ENCODE measurements at regions of chr7 and their contacts with region 1.

Region 1: GRCh38 chr7:20172736-20173334 is 44.3 kb downstream of the MACC1 start:
- DNase-seq: peak; percentile 84
- ATAC-seq: peak; percentile 100
- H3K4me3 Mint-ChIP-seq: no peak overlapping the region
- H3K27ac Mint-ChIP-seq: no peak overlapping the region
- H3K4me1 Mint-ChIP-seq: peaks cover 28% of the 10 kb centered on the region
- H3K27me3 Mint-ChIP-seq: no peaks in the 10 kb centered on the region
- CTCF ChIP-seq: peak; percentile 49

Region 2: DNA sequence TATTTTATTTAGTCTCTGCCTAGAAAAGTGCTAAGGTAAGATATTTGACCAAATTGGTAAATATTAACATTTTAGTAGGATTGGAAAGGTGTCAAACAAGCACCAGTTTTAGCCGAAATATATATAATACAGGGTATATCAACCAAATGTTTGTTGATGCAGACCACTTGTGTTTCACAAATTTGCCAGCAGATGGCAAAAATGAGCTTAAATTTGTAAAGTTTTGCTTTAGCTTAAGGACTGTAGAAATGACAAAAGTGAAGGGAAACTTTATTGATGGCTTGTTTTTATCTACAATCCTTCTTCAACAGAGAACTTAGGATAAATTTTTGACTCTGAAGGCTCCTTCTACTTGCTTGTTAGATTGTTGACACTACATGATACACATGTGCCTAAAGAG is 459.2 kb before region 1 on chr7:
- CTCF ChIA-PET with region 1: interaction called, 12 read pairs
- POLR2A ChIA-PET with region 1: no interaction called
- DNase-seq: peak; percentile 29
- ATAC-seq: no peak
- H3K4me3 Mint-ChIP-seq: no peak overlapping the region
- H3K27ac Mint-ChIP-seq: no peak overlapping the region
- H3K4me1 Mint-ChIP-seq: peaks cover 6% of the 10 kb centered on the region; the same call in 1 of the 2 replicates
- H3K27me3 Mint-ChIP-seq: peaks cover 6% of the 10 kb centered on the region
- CTCF ChIP-seq: peak; percentile 33; the same call in 1 of the 2 replicates

Region 3: DNA sequence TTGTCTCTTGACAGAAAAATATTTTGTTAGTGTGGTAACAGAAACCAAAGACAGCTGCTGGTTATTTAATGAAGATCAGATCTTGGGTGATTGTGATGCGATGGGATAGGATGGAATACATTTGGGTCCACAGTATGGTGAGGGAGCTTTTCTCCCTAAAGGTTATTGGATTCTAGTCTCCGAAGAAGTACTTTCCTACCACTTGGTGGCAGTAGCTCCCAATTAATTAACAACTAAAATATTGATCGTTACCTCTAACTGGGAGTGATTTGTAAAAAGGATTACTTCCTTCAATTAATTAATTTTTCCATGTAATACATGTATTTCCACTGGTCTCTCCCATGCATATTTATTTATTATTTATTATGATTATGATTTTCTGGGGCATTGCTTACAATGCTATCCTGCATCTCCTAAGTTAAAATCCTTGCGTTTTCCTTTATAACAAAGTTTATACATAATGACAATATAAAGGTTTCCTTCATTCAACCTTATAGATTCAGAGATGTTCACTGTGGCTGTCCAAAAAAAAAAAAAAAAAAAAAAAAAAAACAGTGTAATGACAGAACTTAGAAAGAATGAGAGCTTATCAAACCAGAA is 425.0 kb before region 1 on chr7:
- CTCF ChIA-PET with region 1: interaction called, 23 read pairs
- POLR2A ChIA-PET with region 1: no interaction called
- DNase-seq: no peak
- ATAC-seq: peak; percentile 85
- H3K4me3 Mint-ChIP-seq: no peak overlapping the region
- H3K27ac Mint-ChIP-seq: no peak overlapping the region
- H3K4me1 Mint-ChIP-seq: 0 out of 2 replicates have a peak, but pooled peaks cover 3% of the 10 kb centered on the region
- H3K27me3 Mint-ChIP-seq: no peaks in the 10 kb centered on the region
- CTCF ChIP-seq: peak; percentile 36

Region 4: DNA sequence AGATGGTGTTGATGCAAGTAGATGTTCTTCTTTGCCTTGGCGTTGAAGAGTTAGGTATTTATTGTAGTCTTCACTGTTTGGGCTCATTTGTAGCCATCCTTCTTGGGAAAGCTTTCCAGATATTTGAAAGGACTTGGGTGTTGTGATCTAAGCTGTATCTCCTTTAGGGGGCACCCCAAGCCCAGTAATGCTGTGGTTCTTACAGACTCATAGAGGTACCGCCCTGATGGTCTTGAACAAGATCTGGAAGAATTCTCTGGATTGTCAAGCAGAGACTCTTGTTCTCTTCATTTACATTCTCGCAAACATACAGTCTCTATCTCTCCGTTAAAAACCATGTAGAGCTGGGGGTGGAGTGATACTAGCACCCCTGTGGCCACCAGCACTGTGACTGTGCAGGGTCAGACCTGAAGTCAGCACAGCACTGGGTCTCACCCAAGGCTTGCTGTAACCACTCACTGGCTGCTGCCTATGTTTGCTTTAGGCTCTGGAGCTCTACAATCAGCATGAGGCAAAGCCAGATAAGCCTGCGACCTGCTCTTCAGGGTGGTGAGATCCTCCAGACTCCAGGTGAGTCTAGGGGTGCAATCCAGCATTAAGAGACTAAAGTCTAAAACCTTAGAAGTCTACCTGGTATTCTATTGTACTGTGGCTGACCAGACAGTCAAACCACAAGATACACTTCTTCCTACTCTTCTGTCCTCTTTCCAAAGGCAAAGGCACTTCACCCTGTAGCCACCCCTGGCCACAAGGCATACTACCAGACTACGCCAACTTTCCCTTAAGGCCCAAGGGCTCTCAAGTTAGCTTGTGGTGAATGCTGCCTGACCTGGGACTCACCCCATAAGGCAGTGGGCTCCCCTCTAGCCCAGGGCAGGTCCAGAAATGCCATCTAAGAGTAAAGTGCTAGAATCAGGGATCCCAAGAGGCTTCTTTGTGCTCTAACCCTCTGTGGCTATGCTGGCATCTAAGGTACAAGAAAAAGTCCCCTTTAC is 189.7 kb before region 1 on chr7:
- CTCF ChIA-PET with region 1: interaction called, 50 read pairs
- POLR2A ChIA-PET with region 1: no interaction called
- DNase-seq: peak; percentile 74
- ATAC-seq: peak; percentile 62
- H3K4me3 Mint-ChIP-seq: no peak overlapping the region
- H3K27ac Mint-ChIP-seq: peak overlapping the region; percentile 86
- H3K4me1 Mint-ChIP-seq: peaks cover 51% of the 10 kb centered on the region
- H3K27me3 Mint-ChIP-seq: no peaks in the 10 kb centered on the region
- CTCF ChIP-seq: no peak

Region 5: DNA sequence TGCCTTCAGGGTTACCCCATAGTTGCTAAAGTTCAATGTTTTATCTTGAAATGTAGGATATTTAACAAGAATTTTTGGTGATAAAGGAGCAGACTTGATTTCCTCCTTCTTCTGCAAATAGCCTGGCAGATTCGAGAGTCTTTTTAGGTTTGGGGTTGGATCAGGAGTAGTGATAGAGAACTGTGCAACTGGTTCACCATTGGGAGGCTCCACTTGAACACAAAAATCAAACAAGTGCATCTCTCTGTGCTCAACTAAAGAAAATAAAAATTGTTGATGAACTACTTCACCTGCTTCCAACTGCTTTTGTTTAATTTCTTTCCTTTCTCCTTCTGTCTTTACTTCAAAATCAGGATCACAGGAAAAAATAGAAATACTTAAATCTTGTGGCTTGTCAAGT is 14.2 kb before region 1 on chr7:
- CTCF ChIA-PET with region 1: interaction called, 10 read pairs
- POLR2A ChIA-PET with region 1: no interaction called
- DNase-seq: no peak
- ATAC-seq: peak; percentile 44
- H3K4me3 Mint-ChIP-seq: no peak overlapping the region
- H3K27ac Mint-ChIP-seq: peak overlapping the region; percentile 58; the same call in 1 of the 2 replicates
- H3K4me1 Mint-ChIP-seq: peaks cover 23% of the 10 kb centered on the region
- H3K27me3 Mint-ChIP-seq: no peaks in the 10 kb centered on the region
- CTCF ChIP-seq: no peak

Region 6: DNA sequence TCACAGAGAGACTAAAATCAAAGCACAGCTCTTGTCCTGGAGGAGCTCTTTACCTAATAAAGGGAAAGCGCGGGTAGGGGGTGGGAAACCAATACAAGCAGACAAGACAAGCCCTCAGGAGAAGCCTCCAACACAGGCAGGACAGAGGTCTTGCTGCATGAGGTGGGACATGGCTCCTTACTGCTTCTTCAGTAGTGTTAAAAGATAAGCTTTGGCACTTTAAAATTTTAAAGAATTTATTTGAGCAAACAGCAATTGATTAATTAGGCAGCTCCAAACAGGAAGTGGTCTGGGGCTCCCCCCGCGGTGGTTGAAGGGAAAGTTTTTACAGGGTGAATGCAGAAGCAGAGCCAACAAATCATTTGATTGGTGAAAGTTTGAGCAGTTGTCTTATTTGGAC is 94.6 kb after region 1 on chr7:
- CTCF ChIA-PET with region 1: interaction called, 10 read pairs
- POLR2A ChIA-PET with region 1: no interaction called
- DNase-seq: peak; percentile 26
- ATAC-seq: peak; percentile 88
- H3K4me3 Mint-ChIP-seq: no peak overlapping the region
- H3K27ac Mint-ChIP-seq: peak overlapping the region; percentile 91; the same call in 1 of the 2 replicates
- H3K4me1 Mint-ChIP-seq: peaks cover 25% of the 10 kb centered on the region
- H3K27me3 Mint-ChIP-seq: no peaks in the 10 kb centered on the region
- CTCF ChIP-seq: no peak

Measured in WTC11 (cell line).